Activated naive CD4-positive, alpha-beta T cell treated with anti-CD3 and anti-CD28 coated beads for 36 hours (primary cell): ENCODE measurements at regions of chr10 and their contacts with region 1.

Region 1: DNA sequence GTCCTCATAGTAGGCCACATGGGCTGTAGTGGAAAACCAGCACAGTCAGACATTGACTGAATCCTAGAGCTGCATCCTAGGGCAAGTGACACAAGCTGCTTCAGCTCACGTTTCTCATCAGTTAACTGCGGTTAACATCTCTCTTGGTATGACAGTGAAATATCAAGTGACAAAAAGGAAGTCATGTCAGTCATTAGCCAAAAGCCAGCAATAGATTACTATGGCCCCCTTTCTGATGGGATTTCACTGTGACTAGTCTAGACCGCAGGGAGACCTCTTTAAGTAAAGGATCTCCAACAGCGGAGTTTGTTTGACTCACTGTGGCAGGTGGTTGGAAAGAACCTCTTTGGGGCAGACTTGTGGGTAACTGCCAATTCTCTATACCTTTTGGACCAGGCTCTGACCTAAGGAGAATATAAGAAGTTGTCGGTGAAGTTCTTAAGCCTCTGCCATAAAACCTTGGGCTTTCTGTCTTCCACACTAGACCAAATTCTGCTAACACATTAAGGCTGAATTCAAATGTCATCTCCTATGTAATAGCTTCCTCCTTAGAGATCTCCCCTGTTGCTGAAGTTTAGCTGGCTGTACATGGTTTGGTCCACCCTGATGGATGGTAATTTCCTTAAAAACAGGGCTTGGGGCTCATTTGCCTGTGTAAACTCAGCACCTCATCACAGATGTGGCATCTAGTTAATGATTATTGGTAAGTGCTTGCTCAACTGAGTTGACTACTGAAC is 115.3 kb downstream of the SGMS1 start:
- DNase-seq: peak; percentile 13
- H3K4me3 Mint-ChIP-seq: no peak overlapping the region
- H3K27ac Mint-ChIP-seq: no peak overlapping the region
- H3K4me1 Mint-ChIP-seq: peaks cover 49% of the 10 kb centered on the region
- H3K27me3 Mint-ChIP-seq: no peaks in the 10 kb centered on the region

Region 2: GRCh38 chr10:50347394-50347802 is 161.1 kb before region 1 on chr10:
- CTCF ChIA-PET with region 1: no interaction called
- intact Hi-C with region 1: no loop called
- DNase-seq: peak; percentile 13
- H3K4me3 Mint-ChIP-seq: no peak overlapping the region
- H3K27ac Mint-ChIP-seq: no peak overlapping the region
- H3K4me1 Mint-ChIP-seq: peaks cover 11% of the 10 kb centered on the region
- H3K27me3 Mint-ChIP-seq: no peaks in the 10 kb centered on the region

Region 3: GRCh38 chr10:50497757-50498156 is 10.7 kb before region 1 on chr10:
- CTCF ChIA-PET with region 1: no interaction called
- intact Hi-C with region 1: loop called (anchors 1 kb)
- DNase-seq: no peak
- H3K4me3 Mint-ChIP-seq: no peak overlapping the region
- H3K27ac Mint-ChIP-seq: peak overlapping the region; percentile 54
- H3K4me1 Mint-ChIP-seq: peaks cover 42% of the 10 kb centered on the region
- H3K27me3 Mint-ChIP-seq: no peaks in the 10 kb centered on the region